ENCODE measurements at regions of chrX and their contacts with region 1.

Region 1: DNA sequence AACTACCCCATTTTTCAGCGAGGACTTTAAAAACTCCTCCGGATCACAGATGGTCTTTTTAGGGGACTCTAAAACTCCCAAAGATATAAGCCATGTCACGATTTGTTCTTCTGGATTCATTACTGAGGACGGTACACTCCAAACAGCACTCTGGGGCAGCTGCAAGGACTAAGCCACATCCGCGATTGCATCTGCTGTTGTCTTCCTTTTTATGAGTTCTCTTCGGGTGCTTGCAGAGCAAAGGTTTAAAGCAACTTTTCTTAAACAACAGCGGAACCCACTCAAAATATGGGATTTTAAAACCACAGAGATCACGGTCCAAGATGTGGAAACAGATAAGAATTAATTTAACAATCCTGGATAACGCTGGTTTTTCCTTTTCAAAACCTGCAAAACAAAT is at the start of gene ARHGEF6:
- DNase-seq: peak in 6 of 9 donors; percentile 28 to 52 (median 46)
- ATAC-seq: peak; percentile 72
- H3K4me3 ChIP-seq: peak within 1 kb of the TSS; percentile 77
- H3K4me3 Mint-ChIP-seq: peak within 1 kb of the TSS; percentile 85 to 96 (median 93)
- H3K27ac ChIP-seq: peak within 1 kb of the TSS; percentile 80
- H3K27ac Mint-ChIP-seq: peak within 1 kb of the TSS; percentile 84 to 97 (median 96)
- H3K4me1 ChIP-seq: peaks cover 7 to 29% of the 10 kb centered on the region in 2 donors
- H3K4me1 Mint-ChIP-seq: peaks cover 32 to 73% (median 64%) of the 10 kb centered on the region in 7 donors
- H3K27me3 ChIP-seq: no peaks in the 10 kb centered on the region
- H3K27me3 Mint-ChIP-seq: no peaks in the 10 kb centered on the region
- total RNA-seq, gene ARHGEF6: 66.1 to 102 (median 81.5) TPM

Region 2: DNA sequence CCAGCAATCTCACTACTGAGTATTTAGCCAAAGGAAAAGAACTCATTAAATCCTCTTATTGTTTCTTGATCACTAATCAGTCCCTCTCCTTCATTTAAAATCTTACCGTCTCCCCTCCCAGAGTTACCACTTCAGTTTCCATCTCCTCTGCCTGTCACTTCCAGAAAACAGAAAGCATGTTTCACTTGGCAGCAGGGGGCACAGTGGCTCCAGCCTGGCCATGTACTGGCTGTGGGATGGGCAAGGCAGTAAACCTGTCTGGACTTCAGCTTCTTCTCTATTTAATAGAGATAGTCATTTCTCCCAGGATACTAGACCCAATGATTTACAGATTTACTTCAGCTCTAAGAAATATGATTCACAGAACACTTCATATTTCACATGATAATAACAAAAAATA is 69.6 kb before region 1 on chrX:
- CTCF ChIA-PET with region 1: no interaction called
- POLR2A ChIA-PET with region 1: interaction called, 6 read pairs
- intact Hi-C with region 1: loop called in 1 of 2 experiments (anchors 5 kb)
- DNase-seq: no peak
- ATAC-seq: no peak
- H3K4me3 ChIP-seq: no peak overlapping the region
- H3K4me3 Mint-ChIP-seq: peak overlapping the region in 2 of 10 donors; percentile 8 to 18
- H3K27ac ChIP-seq: peak overlapping the region; percentile 68
- H3K27ac Mint-ChIP-seq: peak overlapping the region; percentile 6 to 95 (median 84)
- H3K4me1 ChIP-seq: peaks cover 5 to 10% of the 10 kb centered on the region in 2 donors
- H3K4me1 Mint-ChIP-seq: peaks cover 0 to 50% (median 46%) of the 10 kb centered on the region in 7 donors
- H3K27me3 ChIP-seq: no peaks in the 10 kb centered on the region
- H3K27me3 Mint-ChIP-seq: no peaks in the 10 kb centered on the region

Region 3: GRCh38 chrX:136767104-136767941 is 13.4 kb before region 1 on chrX:
- CTCF ChIA-PET with region 1: no interaction called
- POLR2A ChIA-PET with region 1: interaction called, 14 read pairs
- intact Hi-C with region 1: loop called (anchors 1 kb)
- DNase-seq: peak; percentile 20 to 48 (median 41)
- ATAC-seq: peak; percentile 81
- H3K4me3 ChIP-seq: peak overlapping the region; percentile 61
- H3K4me3 Mint-ChIP-seq: peak overlapping the region; percentile 80 to 90 (median 82)
- H3K27ac ChIP-seq: peak overlapping the region; percentile 66
- H3K27ac Mint-ChIP-seq: peak overlapping the region; percentile 66 to 94 (median 87)
- H3K4me1 ChIP-seq: peaks cover 17 to 46% of the 10 kb centered on the region in 2 donors
- H3K4me1 Mint-ChIP-seq: peaks cover 27 to 81% (median 68%) of the 10 kb centered on the region in 7 donors
- H3K27me3 ChIP-seq: no peaks in the 10 kb centered on the region
- H3K27me3 Mint-ChIP-seq: no peaks in the 10 kb centered on the region

Region 4: DNA sequence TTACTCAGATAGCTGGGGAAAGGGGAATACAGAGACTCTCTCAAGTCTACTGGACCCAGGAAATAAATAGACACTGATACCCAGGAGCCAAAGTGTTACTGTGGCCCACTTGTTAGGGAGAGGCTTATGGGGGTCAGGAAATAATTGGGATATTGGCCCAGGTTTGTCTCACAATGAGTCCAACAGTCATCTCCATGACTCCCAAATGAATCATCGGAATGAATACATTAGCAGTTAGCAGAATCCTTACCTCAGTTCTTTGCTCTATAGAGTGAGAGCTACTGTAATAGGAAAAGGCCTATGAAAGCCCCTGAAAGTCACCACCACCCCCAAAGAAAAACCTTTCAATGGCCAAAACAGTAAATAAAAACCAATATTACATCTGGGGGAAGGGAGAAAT is 42.4 kb after region 1 on chrX:
- CTCF ChIA-PET with region 1: no interaction called
- POLR2A ChIA-PET with region 1: no interaction called
- intact Hi-C with region 1: no loop called
- DNase-seq: no peak
- ATAC-seq: no peak
- H3K4me3 ChIP-seq: no peak overlapping the region
- H3K4me3 Mint-ChIP-seq: no peak overlapping the region
- H3K27ac ChIP-seq: no peak overlapping the region
- H3K27ac Mint-ChIP-seq: no peak overlapping the region
- H3K4me1 ChIP-seq: no peaks in the 10 kb centered on the region
- H3K4me1 Mint-ChIP-seq: no peaks in the 10 kb centered on the region
- H3K27me3 ChIP-seq: no peaks in the 10 kb centered on the region
- H3K27me3 Mint-ChIP-seq: no peaks in the 10 kb centered on the region

Region 5: GRCh38 chrX:136866337-136867095 is 85.8 kb after region 1 on chrX:
- CTCF ChIA-PET with region 1: no interaction called
- POLR2A ChIA-PET with region 1: interaction called, 3 read pairs
- intact Hi-C with region 1: loop called (anchors 5 kb)
- DNase-seq: no peak
- ATAC-seq: no peak
- H3K4me3 ChIP-seq: no peak overlapping the region
- H3K4me3 Mint-ChIP-seq: peak overlapping the region in 1 of 10 donors; percentile 22
- H3K27ac ChIP-seq: no peak overlapping the region
- H3K27ac Mint-ChIP-seq: peak overlapping the region in 5 of 9 donors; percentile 45 to 87 (median 71)
- H3K4me1 ChIP-seq: no peaks in the 10 kb centered on the region
- H3K4me1 Mint-ChIP-seq: peaks cover 5 to 32% (median 26%) of the 10 kb centered on the region in 7 donors
- H3K27me3 ChIP-seq: no peaks in the 10 kb centered on the region
- H3K27me3 Mint-ChIP-seq: no peaks in the 10 kb centered on the region

Region 6: GRCh38 chrX:136909706-136910564 is 129.2 kb after region 1 on chrX:
- CTCF ChIA-PET with region 1: no interaction called
- POLR2A ChIA-PET with region 1: interaction called, 7 read pairs
- intact Hi-C with region 1: loop called (anchors 1 to 10 kb)
- DNase-seq: peak; percentile 10 to 59 (median 39)
- ATAC-seq: peak; percentile 75
- H3K4me3 ChIP-seq: peak overlapping the region; percentile 84
- H3K4me3 Mint-ChIP-seq: peak overlapping the region; percentile 87 to 97 (median 96)
- H3K27ac ChIP-seq: peak overlapping the region; percentile 89
- H3K27ac Mint-ChIP-seq: peak overlapping the region; percentile 75 to 97 (median 91)
- H3K4me1 ChIP-seq: peaks cover 0 to 7% of the 10 kb centered on the region in 2 donors
- H3K4me1 Mint-ChIP-seq: peaks cover 0 to 22% (median 11%) of the 10 kb centered on the region in 7 donors
- H3K27me3 ChIP-seq: no peaks in the 10 kb centered on the region
- H3K27me3 Mint-ChIP-seq: no peaks in the 10 kb centered on the region